Endothelial cell of umbilical vein (primary cell): ENCODE measurements at regions of chr10 and their contacts with region 1.

Region 1: DNA sequence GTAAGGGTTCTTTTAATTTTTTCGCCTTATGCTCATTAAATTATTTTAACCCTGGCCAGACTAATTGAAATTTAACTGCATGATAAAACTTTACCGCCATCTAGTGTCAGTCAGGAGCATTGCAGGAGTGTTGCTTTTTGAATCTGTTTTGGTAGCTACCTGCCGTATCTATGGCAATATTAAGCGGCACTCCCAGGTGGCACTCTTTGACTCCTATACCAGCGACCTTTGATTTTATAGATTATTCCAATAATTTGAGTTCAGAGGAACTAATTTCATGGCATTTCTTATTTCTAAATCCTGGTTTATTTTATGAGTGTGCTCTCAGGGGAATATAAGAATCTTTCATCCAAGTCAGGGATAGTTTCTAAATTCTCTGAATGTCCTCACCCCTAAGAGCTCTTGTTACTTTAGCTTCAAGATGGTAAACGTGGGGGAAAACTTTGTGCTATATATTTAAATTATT is 198.9 kb downstream of the REEP3 start:
- DNase-seq: peak; percentile 62
- H3K4me3 ChIP-seq: no peak overlapping the region
- H3K27ac ChIP-seq: no peak overlapping the region
- H3K4me1 ChIP-seq: peaks cover 20% of the 10 kb centered on the region
- H3K27me3 ChIP-seq: no peaks in the 10 kb centered on the region
- CTCF ChIP-seq: peak; percentile 76 to 81
- POLR2A ChIP-seq: no peak

Region 2: DNA sequence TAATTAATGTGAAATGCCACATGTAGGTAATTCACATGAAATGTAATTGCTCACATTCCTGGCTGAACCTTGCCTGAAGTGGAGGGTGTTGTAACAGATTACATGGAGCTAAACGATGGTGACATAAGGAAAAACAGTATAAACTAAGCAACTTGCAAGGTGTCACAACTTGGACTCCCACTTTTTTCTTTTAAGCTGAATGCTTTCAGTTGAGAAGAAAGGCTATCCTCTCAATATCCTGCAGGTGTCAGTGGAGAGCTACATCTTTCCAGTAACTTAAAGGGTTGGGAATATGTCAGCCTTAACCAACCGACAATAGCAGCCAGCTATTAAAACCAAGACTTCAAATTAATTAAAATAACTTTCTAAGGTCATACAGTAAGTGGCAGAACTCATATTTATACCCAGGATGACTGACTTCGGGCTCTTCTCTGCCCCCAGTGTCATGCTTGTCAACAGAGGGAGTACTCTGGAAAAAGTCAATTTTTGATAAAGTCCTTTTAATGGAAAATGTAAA is 553.3 kb before region 1 on chr10:
- CTCF ChIA-PET with region 1: interaction called, 275 read pairs
- POLR2A ChIA-PET with region 1: interaction called, 4 read pairs
- dilution Hi-C with region 1: no loop called
- intact Hi-C with region 1: loop called (anchors 1 kb)
- DNase-seq: peak; percentile 84
- H3K4me3 ChIP-seq: no peak overlapping the region
- H3K27ac ChIP-seq: no peak overlapping the region
- H3K4me1 ChIP-seq: no peaks in the 10 kb centered on the region
- H3K27me3 ChIP-seq: no peaks in the 10 kb centered on the region
- CTCF ChIP-seq: peak; percentile 61 to 62
- POLR2A ChIP-seq: no peak

Region 3: GRCh38 chr10:63256009-63256773 is 463.9 kb before region 1 on chr10:
- CTCF ChIA-PET with region 1: interaction called, 10 read pairs
- POLR2A ChIA-PET with region 1: interaction called, 4 read pairs
- dilution Hi-C with region 1: no loop called
- intact Hi-C with region 1: no loop called
- DNase-seq: peak; percentile 42
- H3K4me3 ChIP-seq: no peak overlapping the region
- H3K27ac ChIP-seq: no peak overlapping the region
- H3K4me1 ChIP-seq: peaks cover 21% of the 10 kb centered on the region
- H3K27me3 ChIP-seq: no peaks in the 10 kb centered on the region
- CTCF ChIP-seq: no peak
- POLR2A ChIP-seq: no peak

Region 4: DNA sequence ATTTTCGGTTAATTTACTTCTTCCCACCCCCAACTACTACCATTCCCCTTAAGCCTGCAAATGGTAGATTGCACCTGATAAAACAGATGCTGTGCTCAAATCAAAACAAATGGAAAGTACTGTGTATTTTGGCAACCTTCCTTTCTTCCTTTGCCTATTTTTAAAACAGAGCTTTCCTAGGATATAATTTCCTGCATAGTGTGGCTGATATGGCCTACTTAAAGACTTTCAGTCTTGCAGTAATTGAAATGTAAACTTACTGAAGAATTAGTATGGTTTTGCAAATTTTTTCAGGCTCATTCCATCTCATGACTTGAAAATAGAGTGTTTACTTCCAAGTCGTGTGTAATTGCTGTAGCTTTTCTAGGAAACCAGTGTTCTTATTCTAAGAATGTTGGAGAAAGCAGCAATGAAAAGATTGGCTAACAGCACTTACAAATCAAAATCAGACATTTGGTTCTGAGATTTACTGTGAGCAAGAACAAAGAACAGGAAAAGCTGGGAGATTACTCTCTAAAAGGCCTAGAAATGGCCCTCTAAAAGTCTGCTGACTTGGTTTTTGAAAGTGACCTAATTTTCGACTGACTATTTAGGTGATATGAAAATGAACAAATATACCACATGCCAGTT is 146.9 kb before region 1 on chr10:
- CTCF ChIA-PET with region 1: interaction called, 12 read pairs
- POLR2A ChIA-PET with region 1: no interaction called
- dilution Hi-C with region 1: no loop called
- intact Hi-C with region 1: no loop called
- DNase-seq: peak; percentile 95
- H3K4me3 ChIP-seq: peak overlapping the region in 1 of 3 experiments; percentile 16
- H3K27ac ChIP-seq: peak overlapping the region; percentile 68
- H3K4me1 ChIP-seq: peaks cover 33% of the 10 kb centered on the region
- H3K27me3 ChIP-seq: no peaks in the 10 kb centered on the region
- CTCF ChIP-seq: no peak
- POLR2A ChIP-seq: no peak

Region 5: DNA sequence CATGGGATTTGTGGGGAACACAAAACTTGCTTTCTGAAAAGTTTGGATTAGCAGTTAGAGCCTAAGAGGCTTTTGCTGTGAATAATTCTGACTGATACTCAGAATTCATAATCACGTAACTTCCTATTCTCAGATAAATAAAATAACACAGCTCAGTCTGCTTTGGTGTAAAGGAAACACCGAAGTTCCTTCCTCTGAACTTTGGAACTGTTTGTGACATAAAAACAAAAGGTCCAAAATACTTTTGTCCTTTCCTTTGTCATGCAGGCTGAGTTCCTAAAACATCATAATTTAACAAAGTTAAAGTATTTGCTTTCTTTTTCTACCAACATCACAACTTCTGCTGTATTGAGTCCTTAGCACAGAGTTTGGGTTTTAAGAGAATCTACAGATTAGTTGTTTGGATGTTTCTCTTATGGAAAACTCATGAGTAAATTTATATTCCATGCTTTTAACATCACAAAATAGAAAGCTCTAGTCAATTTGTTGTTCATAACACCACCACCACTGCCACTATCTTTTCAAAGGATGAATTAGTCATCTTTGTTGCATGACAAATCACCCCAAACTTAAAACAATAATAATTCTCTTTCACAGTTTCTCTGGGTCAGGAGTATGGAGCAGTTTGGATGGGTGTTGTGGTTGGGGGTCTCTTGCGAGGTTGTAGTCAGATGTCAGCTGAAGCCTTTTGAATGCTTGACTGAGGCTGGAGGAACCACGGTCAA is 75.5 kb before region 1 on chr10:
- CTCF ChIA-PET with region 1: interaction called, 6 read pairs
- POLR2A ChIA-PET with region 1: no interaction called
- dilution Hi-C with region 1: no loop called
- intact Hi-C with region 1: loop called (anchors 1 kb)
- DNase-seq: peak; percentile 88
- H3K4me3 ChIP-seq: peak overlapping the region in 1 of 3 experiments; percentile 10
- H3K27ac ChIP-seq: peak overlapping the region; percentile 86
- H3K4me1 ChIP-seq: peaks cover 33% of the 10 kb centered on the region
- H3K27me3 ChIP-seq: no peaks in the 10 kb centered on the region
- CTCF ChIP-seq: no peak
- POLR2A ChIP-seq: peak; percentile 42

Region 6: DNA sequence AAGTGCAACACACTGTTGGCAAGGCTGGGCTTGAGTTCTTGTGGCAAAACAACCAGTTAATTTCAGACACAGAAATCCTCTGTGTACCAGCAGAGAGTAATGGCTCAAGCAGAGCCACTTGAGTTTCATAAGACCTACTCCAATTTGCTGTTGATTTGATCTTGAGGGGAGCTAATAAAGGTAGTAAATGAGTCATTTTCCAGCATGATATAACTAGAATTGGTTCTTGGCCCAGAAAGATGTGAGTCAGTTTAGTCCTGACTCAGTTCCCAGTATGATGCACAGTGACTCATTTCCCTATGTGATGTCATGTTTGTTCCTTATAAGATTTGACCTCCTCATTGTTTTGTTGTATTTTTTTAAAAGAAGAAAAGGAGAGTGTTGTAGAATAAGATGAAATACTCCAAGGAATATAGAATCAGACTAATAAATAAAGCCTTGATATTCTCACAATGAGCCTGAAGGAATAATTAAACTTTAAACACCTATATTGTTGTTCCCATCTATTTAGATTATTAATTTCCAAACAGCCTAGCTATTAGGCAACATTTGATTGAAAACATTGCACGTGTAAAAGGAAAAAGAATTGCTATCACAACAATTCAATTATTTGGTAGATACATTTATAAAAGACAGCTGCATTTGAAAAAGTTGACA is 12.7 kb before region 1 on chr10:
- CTCF ChIA-PET with region 1: interaction called, 11 read pairs
- POLR2A ChIA-PET with region 1: no interaction called
- dilution Hi-C with region 1: no loop called
- intact Hi-C with region 1: no loop called
- DNase-seq: peak; percentile 99
- H3K4me3 ChIP-seq: no peak overlapping the region
- H3K27ac ChIP-seq: peak overlapping the region; percentile 74
- H3K4me1 ChIP-seq: peaks cover 32% of the 10 kb centered on the region
- H3K27me3 ChIP-seq: no peaks in the 10 kb centered on the region
- CTCF ChIP-seq: no peak
- POLR2A ChIP-seq: no peak

Region 7: DNA sequence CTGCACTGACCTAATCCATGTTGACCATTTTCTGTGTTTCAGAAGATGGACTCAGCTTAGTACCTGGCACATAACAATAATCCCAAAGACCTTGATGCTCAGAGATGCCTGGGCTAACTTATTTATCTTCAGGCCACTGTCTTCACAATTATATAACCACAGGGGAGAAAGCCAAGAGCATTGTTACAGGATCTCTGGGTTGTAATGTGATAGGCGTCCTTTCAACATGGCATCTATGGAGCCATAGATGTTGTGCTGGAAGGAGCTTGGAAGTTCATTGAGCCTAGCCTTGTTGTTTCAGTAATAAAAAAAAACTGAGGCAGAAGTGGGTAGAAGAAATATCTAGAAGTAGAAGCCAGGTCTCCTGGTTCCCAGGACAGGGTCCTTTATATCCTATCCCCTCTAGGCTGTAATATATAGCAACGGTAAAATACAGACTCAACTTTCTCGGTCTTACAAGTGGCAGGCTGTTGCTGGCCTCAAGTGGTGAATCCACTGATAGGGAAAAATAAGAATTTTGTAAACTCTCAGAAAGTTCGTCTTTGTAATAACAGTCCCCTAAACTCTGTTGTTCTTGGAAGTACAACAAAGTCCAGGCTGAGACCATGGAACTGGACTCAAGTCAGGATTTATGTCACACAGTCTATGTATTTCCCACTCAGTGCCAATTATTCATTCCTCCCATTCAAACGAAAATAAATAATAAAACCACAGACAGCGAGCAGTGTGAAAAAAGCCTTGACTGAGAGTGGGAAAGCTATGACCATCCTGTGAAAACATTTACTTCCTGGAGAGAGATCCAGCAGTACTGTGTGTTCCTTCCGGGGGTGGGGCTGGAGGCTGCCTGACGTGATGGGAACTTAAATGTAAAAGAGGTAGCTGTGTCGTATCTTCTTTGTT is 78.7 kb after region 1 on chr10:
- CTCF ChIA-PET with region 1: interaction called, 3 read pairs
- POLR2A ChIA-PET with region 1: no interaction called
- dilution Hi-C with region 1: no loop called
- intact Hi-C with region 1: loop called (anchors 1 kb)
- DNase-seq: peak; percentile 97
- H3K4me3 ChIP-seq: peak overlapping the region in 1 of 3 experiments; percentile 22
- H3K27ac ChIP-seq: peak overlapping the region; percentile 88
- H3K4me1 ChIP-seq: peaks cover 16% of the 10 kb centered on the region
- H3K27me3 ChIP-seq: no peaks in the 10 kb centered on the region
- CTCF ChIP-seq: no peak
- POLR2A ChIP-seq: peak; percentile 50

Region 8: GRCh38 chr10:64023926-64024470 is 303.9 kb after region 1 on chr10:
- CTCF ChIA-PET with region 1: no interaction called
- POLR2A ChIA-PET with region 1: no interaction called
- dilution Hi-C with region 1: no loop called
- intact Hi-C with region 1: no loop called
- DNase-seq: no peak
- H3K4me3 ChIP-seq: no peak overlapping the region
- H3K27ac ChIP-seq: no peak overlapping the region
- H3K4me1 ChIP-seq: no peaks in the 10 kb centered on the region
- H3K27me3 ChIP-seq: no peaks in the 10 kb centered on the region
- CTCF ChIP-seq: no peak
- POLR2A ChIP-seq: no peak